ENCODE measurements at regions of chr11 and their contacts with region 1.

Region 1: DNA sequence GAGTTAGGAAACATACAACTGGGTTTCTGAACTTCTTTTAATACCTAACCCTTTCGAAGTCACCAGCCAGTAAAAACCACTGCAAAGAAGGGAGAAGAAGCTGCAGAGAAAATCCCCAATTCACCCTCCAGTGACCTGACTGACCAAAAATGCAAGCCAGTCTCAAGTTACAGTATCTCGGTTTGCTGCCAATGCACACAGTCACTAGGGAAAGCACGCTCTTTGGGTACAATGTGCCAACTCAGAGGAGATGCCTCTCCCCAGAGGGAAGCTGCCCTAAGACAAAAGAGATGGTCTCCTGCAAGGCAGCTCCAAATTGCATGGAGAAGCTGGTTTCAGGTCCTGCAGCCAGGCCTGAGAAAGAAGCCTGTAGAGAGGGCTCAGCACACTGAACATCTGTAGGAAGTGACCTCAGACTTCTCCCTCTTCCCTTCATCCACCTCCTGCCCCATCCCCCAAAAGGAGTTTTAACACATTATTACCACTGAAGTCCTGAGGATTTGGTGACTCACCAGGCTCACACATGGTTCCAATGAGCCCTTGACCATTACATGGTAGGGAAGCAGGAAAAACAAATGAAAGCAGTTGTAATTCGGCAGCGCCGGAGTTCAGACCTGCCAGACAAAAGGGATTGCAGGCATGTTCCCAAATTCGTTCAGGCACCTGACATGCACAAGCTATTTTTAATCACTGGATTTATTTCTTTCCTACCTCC is 90.1 kb downstream of the ETS1 start:
- DNase-seq: peak; percentile 60
- ATAC-seq: peak; percentile 77
- H3K4me3 ChIP-seq: peak overlapping the region in 1 of 5 experiments; percentile 11
- H3K4me3 Mint-ChIP-seq: peak overlapping the region; percentile 51
- H3K27ac ChIP-seq: peak overlapping the region; percentile 8 to 82
- H3K27ac Mint-ChIP-seq: peak overlapping the region; percentile 81
- H3K4me1 ChIP-seq: peaks cover 96 to 98% of the 10 kb centered on the region in 2 donors
- H3K4me1 Mint-ChIP-seq: peaks cover 96% of the 10 kb centered on the region
- H3K27me3 ChIP-seq: no peaks in the 10 kb centered on the region
- H3K27me3 Mint-ChIP-seq: no peaks in the 10 kb centered on the region
- CTCF ChIP-seq: no peak

Region 2: GRCh38 chr11:127075758-127076157 is 1421.5 kb before region 1 on chr11:
- CTCF ChIA-PET with region 1: no interaction called
- POLR2A ChIA-PET with region 1: no interaction called
- intact Hi-C with region 1: no loop called
- DNase-seq: no peak
- ATAC-seq: no peak
- H3K4me3 ChIP-seq: no peak overlapping the region
- H3K4me3 Mint-ChIP-seq: no peak overlapping the region
- H3K27ac ChIP-seq: no peak overlapping the region
- H3K27ac Mint-ChIP-seq: no peak overlapping the region
- H3K4me1 ChIP-seq: peaks cover 0 to 2% of the 10 kb centered on the region in 2 donors
- H3K4me1 Mint-ChIP-seq: peaks cover 3% of the 10 kb centered on the region
- H3K27me3 ChIP-seq: no peaks in the 10 kb centered on the region
- H3K27me3 Mint-ChIP-seq: no peaks in the 10 kb centered on the region
- CTCF ChIP-seq: no peak

Region 3: DNA sequence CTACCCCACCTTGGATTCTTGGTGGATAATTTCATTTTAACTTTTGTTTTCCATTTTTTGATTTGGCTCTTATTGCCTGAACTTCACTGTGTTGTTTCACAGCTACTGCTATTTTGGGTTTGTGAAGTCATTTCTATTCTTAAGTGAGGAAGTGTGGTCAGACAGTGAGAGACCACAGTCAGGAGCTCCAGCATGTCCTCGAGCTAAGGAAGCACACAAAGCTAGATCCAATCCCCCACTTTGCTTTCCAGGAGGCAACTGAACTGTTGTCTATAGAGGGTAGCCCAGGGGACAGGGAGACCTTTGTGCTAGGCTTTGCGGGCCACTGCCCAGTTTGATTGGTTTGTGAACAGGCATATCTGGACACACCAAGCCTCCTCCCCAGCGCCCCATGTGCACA is 1244.9 kb before region 1 on chr11:
- CTCF ChIA-PET with region 1: no interaction called
- POLR2A ChIA-PET with region 1: no interaction called
- intact Hi-C with region 1: no loop called
- DNase-seq: no peak
- ATAC-seq: no peak
- H3K4me3 ChIP-seq: no peak overlapping the region
- H3K4me3 Mint-ChIP-seq: no peak overlapping the region
- H3K27ac ChIP-seq: no peak overlapping the region
- H3K27ac Mint-ChIP-seq: no peak overlapping the region
- H3K4me1 ChIP-seq: no peaks in the 10 kb centered on the region
- H3K4me1 Mint-ChIP-seq: no peaks in the 10 kb centered on the region
- H3K27me3 ChIP-seq: no peaks in the 10 kb centered on the region
- H3K27me3 Mint-ChIP-seq: no peaks in the 10 kb centered on the region
- CTCF ChIP-seq: no peak

Region 4: DNA sequence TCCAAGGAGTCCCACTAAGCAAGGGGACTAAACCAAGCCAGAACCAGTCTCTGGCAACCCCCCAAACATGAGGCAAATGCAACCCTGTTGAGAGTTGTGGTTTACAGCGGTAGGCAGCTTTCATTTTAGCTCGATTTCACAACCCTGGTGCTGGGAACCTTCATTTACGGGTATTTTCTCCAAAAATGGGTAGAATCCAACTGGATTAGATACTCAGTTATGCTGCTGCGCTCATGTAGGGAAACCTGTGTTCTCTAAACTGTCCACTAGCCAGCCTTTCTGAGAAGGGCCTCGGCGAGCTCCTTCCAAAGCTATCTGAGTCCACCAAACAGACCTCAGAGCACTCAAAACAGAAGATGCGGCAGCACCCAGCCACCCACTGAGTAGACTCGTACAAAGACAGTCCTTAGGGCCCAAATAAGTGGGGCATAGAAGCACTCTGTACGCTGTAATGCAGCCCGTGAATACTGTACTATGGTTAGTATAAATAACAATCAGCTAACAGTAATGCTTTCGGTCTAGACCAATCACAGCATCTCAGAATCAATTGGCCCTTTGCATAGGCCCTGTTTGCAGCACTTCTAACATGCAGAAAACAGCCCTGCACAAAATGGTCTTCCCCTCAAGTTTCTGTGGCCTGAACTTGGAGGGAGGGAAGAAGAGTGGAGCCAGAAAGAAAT is 14.6 kb before region 1 on chr11:
- CTCF ChIA-PET with region 1: interaction called, 4 read pairs
- POLR2A ChIA-PET with region 1: interaction called, 3 read pairs
- intact Hi-C with region 1: loop called (anchors 2 kb)
- DNase-seq: no peak
- ATAC-seq: peak; percentile 13
- H3K4me3 ChIP-seq: peak overlapping the region in 2 of 5 experiments; percentile 27 to 37
- H3K4me3 Mint-ChIP-seq: peak overlapping the region; percentile 61
- H3K27ac ChIP-seq: peak overlapping the region; percentile 77 to 90
- H3K27ac Mint-ChIP-seq: peak overlapping the region; percentile 95
- H3K4me1 ChIP-seq: peaks cover 82% of the 10 kb centered on the region in 2 donors
- H3K4me1 Mint-ChIP-seq: peaks cover 92% of the 10 kb centered on the region
- H3K27me3 ChIP-seq: no peaks in the 10 kb centered on the region
- H3K27me3 Mint-ChIP-seq: no peaks in the 10 kb centered on the region
- CTCF ChIP-seq: no peak

Region 5: DNA sequence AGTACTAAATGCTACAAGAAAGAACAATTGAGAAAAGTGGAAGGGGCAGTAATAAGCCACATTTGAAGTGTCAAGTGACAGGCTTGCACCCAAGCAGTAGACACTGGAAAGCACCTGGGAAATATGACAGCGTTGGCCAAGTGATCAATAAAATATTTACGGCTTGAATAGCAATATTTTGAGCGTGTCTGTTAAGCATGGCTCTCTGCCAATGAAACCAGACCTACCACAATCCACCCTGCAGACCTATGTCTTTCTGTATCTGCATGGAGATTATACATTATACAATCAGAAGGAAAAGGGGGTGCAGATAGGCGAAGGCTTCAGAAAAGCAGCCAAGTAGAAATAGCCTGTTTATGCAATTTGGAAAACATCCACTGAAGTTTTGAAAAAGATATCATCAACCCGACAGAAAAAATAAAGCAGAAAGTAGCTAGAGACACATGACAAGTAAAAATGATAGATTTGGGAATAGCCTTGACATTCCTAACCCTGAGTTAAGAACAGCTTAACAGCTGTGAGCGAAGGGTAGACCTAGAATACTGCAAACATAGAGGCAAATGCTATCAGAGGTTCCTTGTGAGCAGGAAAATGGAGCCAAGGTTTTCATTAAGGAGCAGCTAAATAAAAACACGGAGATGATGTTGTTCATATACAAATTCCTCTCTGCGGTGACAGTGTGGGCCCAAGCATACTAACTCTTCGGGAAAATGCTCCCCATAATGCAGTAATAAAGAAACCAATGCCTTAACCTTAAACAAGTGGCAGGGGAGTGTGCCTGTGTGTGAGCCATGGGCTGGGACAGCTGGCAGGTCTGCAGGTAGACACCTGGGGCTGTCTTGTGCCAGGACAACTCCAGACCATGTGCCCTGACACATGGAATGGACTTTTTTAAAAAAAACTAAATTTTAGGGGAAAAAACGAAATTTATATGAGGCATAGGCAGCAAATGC is 18.9 kb after region 1 on chr11:
- CTCF ChIA-PET with region 1: interaction called, 7 read pairs
- POLR2A ChIA-PET with region 1: interaction called, 3 read pairs
- intact Hi-C with region 1: loop called (anchors 2 kb)
- DNase-seq: no peak
- ATAC-seq: no peak
- H3K4me3 ChIP-seq: peak overlapping the region in 4 of 5 experiments; percentile 79 to 98 (median 92)
- H3K4me3 Mint-ChIP-seq: peak overlapping the region; percentile 92
- H3K27ac ChIP-seq: peak overlapping the region in 1 of 2 donors; percentile 82
- H3K27ac Mint-ChIP-seq: peak overlapping the region; percentile 81
- H3K4me1 ChIP-seq: peaks cover 79 to 82% of the 10 kb centered on the region in 2 donors
- H3K4me1 Mint-ChIP-seq: peaks cover 93% of the 10 kb centered on the region
- H3K27me3 ChIP-seq: no peaks in the 10 kb centered on the region
- H3K27me3 Mint-ChIP-seq: no peaks in the 10 kb centered on the region
- CTCF ChIP-seq: no peak

Region 6: DNA sequence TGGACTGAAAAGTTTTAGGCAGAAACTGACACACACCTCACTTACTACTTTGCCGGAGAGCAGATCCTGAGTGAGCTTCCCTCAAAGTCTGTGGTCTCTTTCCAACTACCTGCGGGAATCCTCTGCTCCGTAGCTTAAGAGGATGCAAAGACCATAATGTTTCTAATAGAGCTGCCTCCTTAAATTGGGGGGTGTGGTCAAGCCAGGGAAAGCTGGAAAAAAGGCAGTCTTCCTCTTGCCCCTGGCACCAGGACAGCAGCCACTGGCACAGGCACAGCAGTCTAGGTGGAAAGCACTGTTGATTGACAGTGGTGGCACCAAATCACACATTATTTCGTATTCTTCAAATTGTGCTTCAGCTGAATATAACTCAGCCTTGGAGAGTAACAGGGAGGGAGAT is 90.2 kb after region 1 on chr11 and contains the start of gene ETS1:
- CTCF ChIA-PET with region 1: no interaction called
- POLR2A ChIA-PET with region 1: no interaction called
- intact Hi-C with region 1: no loop called
- DNase-seq: no peak
- ATAC-seq: no peak
- H3K4me3 ChIP-seq: no peak within 1 kb of the TSS
- H3K4me3 Mint-ChIP-seq: no peak within 1 kb of the TSS
- H3K27ac ChIP-seq: no peak within 1 kb of the TSS
- H3K27ac Mint-ChIP-seq: no peak within 1 kb of the TSS
- H3K4me1 ChIP-seq: peaks cover 0 to 10% of the 10 kb centered on the region in 2 donors
- H3K4me1 Mint-ChIP-seq: peaks cover 29% of the 10 kb centered on the region
- H3K27me3 ChIP-seq: no peaks in the 10 kb centered on the region
- H3K27me3 Mint-ChIP-seq: no peaks in the 10 kb centered on the region
- CTCF ChIP-seq: no peak
- total RNA-seq, gene ETS1: 267 and 271 TPM in 2 replicates